CD4-positive, alpha-beta T cell (primary cell): ENCODE measurements at regions of chr3 and their contacts with region 1.

Region 1: DNA sequence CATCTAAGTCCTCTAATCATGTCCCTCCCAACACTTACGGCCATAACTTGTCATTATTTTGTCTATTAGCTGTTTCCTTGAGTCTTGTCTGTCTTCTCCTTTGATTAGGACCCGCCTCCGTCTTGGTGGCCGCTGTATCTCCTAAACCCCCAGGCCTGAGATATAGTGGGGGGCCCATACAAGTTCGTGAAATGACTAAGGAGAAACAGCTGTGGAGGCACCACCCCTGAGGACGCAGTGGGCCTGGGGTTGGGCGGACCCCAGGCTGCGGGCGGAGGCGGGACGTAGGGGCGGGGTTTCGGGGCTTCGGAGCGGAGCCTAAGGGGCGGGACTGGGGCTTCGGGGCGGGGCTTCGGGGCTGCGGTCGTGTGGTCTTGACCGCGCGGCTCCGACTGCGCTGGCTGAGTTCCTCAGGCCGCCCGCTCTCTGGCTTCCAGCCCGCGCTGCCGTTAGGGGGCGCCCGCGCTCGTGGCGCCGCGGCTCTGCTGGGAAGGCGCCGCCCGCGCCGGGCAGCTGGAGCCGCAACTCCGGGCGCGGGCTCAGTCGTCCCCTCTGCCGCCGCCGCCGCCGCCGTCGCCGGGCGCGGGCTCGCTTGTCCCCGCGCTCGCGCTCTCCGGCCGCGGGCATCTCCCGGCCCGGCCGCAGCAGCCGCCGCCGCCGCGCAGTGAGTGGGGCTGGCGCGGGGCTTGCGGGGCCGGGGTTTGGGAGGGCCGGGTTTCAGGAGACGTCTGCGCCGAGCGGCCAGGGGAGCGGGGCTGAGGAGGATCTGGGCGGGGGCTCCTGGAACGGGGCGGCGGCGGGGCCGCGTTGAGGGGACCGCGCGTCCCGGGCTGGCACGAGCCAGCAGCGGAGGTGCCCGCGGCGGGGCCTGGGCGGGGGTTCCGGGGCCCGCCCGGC is at the start of gene KCTD6:
- DNase-seq: peak; percentile 65 to 95 (median 82)
- ATAC-seq: peak; percentile 85
- H3K4me3 ChIP-seq: peak within 1 kb of the TSS; percentile 81
- H3K4me3 Mint-ChIP-seq: peak within 1 kb of the TSS; percentile 97
- H3K27ac ChIP-seq: peak within 1 kb of the TSS; percentile 16 to 30
- H3K27ac Mint-ChIP-seq: peak within 1 kb of the TSS; percentile 83
- H3K4me1 ChIP-seq: peaks cover 22% of the 10 kb centered on the region
- H3K4me1 Mint-ChIP-seq: peaks cover 65% of the 10 kb centered on the region
- H3K27me3 ChIP-seq: no peaks in the 10 kb centered on the region
- H3K27me3 Mint-ChIP-seq: no peaks in the 10 kb centered on the region
- CTCF ChIP-seq: peak; percentile 55
- total RNA-seq, gene KCTD6: 3.8 to 5.0 TPM

Region 2: GRCh38 chr3:58237238-58237940 is 254.4 kb before region 1 on chr3 and contains the start of gene ABHD6:
- CTCF ChIA-PET with region 1: no interaction called
- POLR2A ChIA-PET with region 1: no interaction called
- intact Hi-C with region 1: loop called in 1 of 2 experiments (anchors 2 kb)
- DNase-seq: peak; percentile 64 to 89 (median 79)
- ATAC-seq: peak; percentile 88
- H3K4me3 ChIP-seq: peak within 1 kb of the TSS; percentile 95
- H3K4me3 Mint-ChIP-seq: peak within 1 kb of the TSS; percentile 96
- H3K27ac ChIP-seq: peak within 1 kb of the TSS; percentile 24 to 57
- H3K27ac Mint-ChIP-seq: peak within 1 kb of the TSS; percentile 61
- H3K4me1 ChIP-seq: peaks cover 19% of the 10 kb centered on the region
- H3K4me1 Mint-ChIP-seq: peaks cover 14% of the 10 kb centered on the region
- H3K27me3 ChIP-seq: peaks cover 0 to 3% of the 10 kb centered on the region in 2 experiments
- H3K27me3 Mint-ChIP-seq: peaks cover 18% of the 10 kb centered on the region
- CTCF ChIP-seq: peak; percentile 16
- total RNA-seq, gene ABHD6: 0.71 to 1.9 TPM

Region 3: DNA sequence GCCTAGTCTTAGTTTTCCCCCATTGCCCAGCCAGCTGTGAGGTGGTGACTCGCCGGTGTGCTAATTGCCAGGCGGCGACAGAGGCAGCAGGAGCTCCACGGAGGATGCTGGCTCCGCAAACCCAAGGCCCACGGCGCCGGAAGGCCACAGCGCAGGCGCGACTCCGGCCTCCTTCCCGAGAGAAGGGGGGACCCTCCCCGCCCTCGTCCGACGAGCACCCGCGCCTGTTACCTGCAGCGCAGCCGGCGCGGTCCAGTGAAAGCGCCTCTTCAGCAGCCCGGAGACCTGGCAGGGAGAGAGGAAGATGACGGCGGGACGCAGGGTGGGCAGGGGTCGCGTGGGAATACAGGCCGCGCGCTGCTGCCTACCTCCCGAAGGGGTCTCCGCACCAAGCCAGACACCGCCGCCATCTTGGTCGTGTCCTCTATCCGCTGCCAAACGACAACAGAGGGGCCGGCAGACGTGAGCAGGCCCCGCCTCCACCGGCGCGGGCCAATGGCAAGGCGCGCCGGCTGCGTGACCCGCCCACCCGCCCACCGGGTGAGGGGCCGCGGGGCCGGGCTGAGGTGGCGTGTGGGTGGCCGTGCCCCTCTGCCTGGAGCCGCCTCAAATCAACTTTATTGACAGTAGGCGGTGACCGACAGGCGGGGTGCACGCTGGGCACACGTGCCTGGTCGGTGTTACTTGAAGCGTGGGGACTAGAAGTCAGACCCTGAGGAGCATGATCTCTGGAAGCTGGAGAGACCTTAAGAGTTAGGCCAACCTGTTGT is 58.2 kb before region 1 on chr3 and contains the start of gene PDHB:
- CTCF ChIA-PET with region 1: interaction called, 17 read pairs
- POLR2A ChIA-PET with region 1: interaction called, 18 read pairs
- intact Hi-C with region 1: loop called (anchors 1 to 2 kb)
- DNase-seq: peak; percentile 77 to 94 (median 86)
- ATAC-seq: peak; percentile 96
- H3K4me3 ChIP-seq: peak within 1 kb of the TSS; percentile 93
- H3K4me3 Mint-ChIP-seq: peak within 1 kb of the TSS; percentile 90
- H3K27ac ChIP-seq: peak within 1 kb of the TSS; percentile 79 to 85
- H3K27ac Mint-ChIP-seq: peak within 1 kb of the TSS; percentile 86
- H3K4me1 ChIP-seq: peaks cover 20% of the 10 kb centered on the region
- H3K4me1 Mint-ChIP-seq: peaks cover 33% of the 10 kb centered on the region
- H3K27me3 ChIP-seq: no peaks in the 10 kb centered on the region
- H3K27me3 Mint-ChIP-seq: no peaks in the 10 kb centered on the region
- CTCF ChIP-seq: no peak
- total RNA-seq, gene PDHB: 31.1 to 31.5 TPM

Region 4: DNA sequence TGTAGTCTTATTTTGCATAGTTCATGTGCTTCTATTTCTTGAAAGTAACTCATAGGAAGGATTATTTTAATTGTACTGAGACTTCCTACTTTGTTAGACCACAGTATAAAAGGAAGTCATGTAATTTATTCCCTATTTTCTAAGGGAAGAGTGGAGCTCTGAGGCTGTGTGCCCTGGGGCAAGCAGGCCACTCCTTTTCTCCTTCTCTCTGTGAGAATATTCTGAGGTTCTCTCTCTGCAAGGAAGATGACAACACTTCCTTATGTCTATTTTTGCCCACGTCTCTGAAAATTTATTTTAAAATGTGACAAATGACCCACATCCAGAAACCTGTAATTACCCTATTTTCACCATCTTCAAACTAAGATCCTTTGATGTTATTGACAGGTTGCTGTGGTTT is 11.1 kb after region 1 on chr3:
- CTCF ChIA-PET with region 1: interaction called, 10 read pairs
- POLR2A ChIA-PET with region 1: interaction called, 3 read pairs
- intact Hi-C with region 1: no loop called
- DNase-seq: no peak
- ATAC-seq: no peak
- H3K4me3 ChIP-seq: no peak overlapping the region
- H3K4me3 Mint-ChIP-seq: no peak overlapping the region
- H3K27ac ChIP-seq: no peak overlapping the region
- H3K27ac Mint-ChIP-seq: no peak overlapping the region
- H3K4me1 ChIP-seq: no peaks in the 10 kb centered on the region
- H3K4me1 Mint-ChIP-seq: peaks cover 19% of the 10 kb centered on the region
- H3K27me3 ChIP-seq: no peaks in the 10 kb centered on the region
- H3K27me3 Mint-ChIP-seq: no peaks in the 10 kb centered on the region
- CTCF ChIP-seq: no peak